Esophagus squamous epithelium (tissue), 5 donors: ENCODE measurements at regions of chr9 and their contacts with region 1.

Region 1: GRCh38 chr9:113317777-113318176 is 14.6 kb upstream of the RNF183 start:
- DNase-seq: no peak
- H3K4me3 ChIP-seq: no peak overlapping the region
- H3K27ac ChIP-seq: no peak overlapping the region
- H3K4me1 ChIP-seq: no peaks in the 10 kb centered on the region
- H3K27me3 ChIP-seq: no peaks in the 10 kb centered on the region
- CTCF ChIP-seq: peak in 2 of 6 experiments; percentile 11 to 22
- POLR2A ChIP-seq: no peak

Region 2: DNA sequence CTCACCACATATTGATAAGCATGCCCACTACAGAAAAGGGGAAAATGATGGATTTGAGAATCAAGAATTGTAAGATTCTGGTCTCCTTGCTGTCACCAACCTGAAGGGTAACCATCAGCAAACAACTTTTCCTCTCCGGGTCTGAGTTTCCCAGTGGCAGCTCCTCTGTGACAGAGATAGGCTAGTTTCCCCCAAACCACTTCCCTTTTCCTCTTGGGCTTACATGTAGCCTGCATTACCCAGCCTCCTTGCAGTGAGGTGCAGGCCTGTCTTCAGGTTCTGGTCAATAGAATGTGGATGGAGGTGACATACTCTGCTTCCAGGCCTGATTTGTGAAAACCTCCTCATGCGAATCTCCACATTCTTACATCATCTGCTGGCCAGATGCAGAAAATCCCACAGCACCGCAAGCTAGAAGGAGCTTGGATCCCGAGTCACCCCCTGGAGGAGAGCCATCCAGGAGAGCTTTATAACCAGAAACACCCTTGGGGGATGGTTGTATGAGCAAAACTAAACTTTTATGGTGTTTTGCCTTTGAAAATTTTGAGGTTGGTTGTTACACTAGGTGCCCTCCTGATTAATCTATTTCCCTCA is 351.8 kb after region 1 on chr9:
- intact Hi-C with region 1: loop called (anchors 10 kb)
- DNase-seq: no peak
- H3K4me3 ChIP-seq: no peak overlapping the region
- H3K27ac ChIP-seq: no peak overlapping the region
- H3K4me1 ChIP-seq: no peaks in the 10 kb centered on the region
- H3K27me3 ChIP-seq: peaks cover 0 to 19% (median 0%) of the 10 kb centered on the region in 4 donors
- CTCF ChIP-seq: no peak
- POLR2A ChIP-seq: no peak